Adrenal gland (tissue), 19 donors: ENCODE measurements at regions of chr12 and their contacts with region 1.

Region 1: DNA sequence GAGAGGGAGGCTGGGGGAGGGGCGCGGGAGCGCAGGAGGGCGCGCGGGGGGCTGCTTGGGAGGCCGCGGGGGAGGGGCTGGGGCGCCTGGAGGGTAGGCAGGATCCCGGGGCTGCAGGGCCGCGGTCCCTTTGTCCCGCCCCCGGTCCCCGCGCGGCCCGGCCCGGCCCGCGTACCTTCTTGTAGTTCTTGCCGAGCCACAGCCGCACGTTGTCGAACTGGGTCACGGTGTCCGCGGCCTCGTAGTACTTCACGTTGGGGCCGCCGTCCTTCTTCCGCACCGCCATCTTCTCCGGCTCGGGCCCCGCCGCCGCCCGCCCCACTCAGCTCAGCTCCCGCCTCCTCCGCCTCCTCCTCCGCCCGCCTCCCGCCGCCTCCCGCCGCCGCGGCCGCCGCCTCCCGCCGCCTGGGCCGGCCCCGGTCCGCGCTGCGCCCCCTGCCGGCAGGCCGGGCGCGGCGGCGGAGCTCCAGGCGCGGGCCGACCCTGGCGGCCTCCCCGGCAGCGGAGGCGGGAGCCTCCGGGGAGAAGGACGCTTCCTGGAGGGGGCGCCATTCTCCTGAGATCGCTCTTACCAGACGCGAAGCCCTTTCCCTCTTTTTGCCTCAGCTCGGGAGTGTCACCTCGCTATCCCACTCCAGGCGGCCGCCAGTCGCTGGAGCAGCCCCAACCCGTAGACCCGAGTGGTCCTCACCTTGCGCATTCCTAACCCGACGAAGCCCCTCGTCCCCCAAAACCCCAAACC is at the start of gene SMARCC2:
- DNase-seq: peak; percentile 86 to 93 (median 90)
- H3K4me3 ChIP-seq: peak within 1 kb of the TSS in 3 of 4 donors; percentile 61 to 88 (median 86)
- H3K27ac ChIP-seq: peak within 1 kb of the TSS; percentile 66 to 92 (median 76)
- H3K4me1 ChIP-seq: peaks cover 16 to 25% of the 10 kb centered on the region in 2 donors
- H3K27me3 ChIP-seq: no peaks in the 10 kb centered on the region
- CTCF ChIP-seq: peak; percentile 43 to 91 (median 68)
- POLR2A ChIP-seq: peak in 1 of 2 donors; percentile 60
- total RNA-seq, gene SMARCC2: 36.3 to 102 (median 64.0) TPM

Region 2: DNA sequence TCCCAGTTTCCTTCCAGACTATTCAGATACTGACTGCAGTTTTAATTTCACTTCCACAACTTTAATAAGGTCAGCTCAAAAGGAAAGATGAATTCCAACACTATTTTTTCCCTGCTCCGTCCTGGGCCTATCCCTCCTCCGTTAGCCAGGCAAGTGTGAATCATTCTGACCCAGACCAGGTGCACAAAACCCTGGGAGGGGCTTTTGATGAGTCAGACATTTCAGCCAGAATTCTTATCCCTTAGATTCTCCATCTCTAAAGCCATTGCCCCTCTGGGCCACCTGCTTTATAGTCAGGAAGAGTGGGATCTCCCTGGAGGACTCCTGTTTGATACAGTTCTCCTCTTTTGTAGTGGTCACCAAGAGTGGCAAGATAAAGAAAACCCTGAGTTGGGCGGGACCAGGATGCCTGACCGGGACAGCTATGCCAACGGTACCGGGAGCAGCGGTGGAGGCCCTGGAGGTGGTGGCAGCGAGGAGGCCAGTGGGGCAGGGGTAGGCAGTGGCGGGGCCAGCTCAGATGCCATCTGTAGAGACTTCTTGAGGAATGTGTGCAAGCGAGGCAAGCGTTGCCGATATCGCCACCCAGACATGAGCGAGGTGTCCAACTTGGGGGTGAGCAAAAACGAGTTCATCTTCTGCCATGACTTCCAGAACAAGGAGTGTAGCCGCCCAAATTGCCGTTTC is 69.0 kb before region 1 on chr12:
- intact Hi-C with region 1: loop called (anchors 2 kb)
- DNase-seq: peak in 5 of 7 donors; percentile 38 to 72 (median 57)
- H3K4me3 ChIP-seq: no peak overlapping the region
- H3K27ac ChIP-seq: peak overlapping the region; percentile 33 to 97 (median 89)
- H3K4me1 ChIP-seq: peaks cover 34 to 47% of the 10 kb centered on the region in 2 donors
- H3K27me3 ChIP-seq: no peaks in the 10 kb centered on the region
- CTCF ChIP-seq: no peak
- POLR2A ChIP-seq: peak in 1 of 2 donors; percentile 15

Region 3: GRCh38 chr12:56229916-56230431 is 40.6 kb after region 1 on chr12 and contains the start of gene SLC39A5:
- intact Hi-C with region 1: loop called in 1 of 2 experiments (anchors 5 kb)
- DNase-seq: no peak
- H3K4me3 ChIP-seq: no peak within 1 kb of the TSS
- H3K27ac ChIP-seq: no peak within 1 kb of the TSS
- H3K4me1 ChIP-seq: peaks cover 2 to 5% of the 10 kb centered on the region in 2 donors
- H3K27me3 ChIP-seq: no peaks in the 10 kb centered on the region
- CTCF ChIP-seq: no peak
- POLR2A ChIP-seq: no peak
- total RNA-seq, gene SLC39A5: 0.50 to 0.83 (median 0.65) TPM in 3 of 9 donors, not detected in the others

Region 4: DNA sequence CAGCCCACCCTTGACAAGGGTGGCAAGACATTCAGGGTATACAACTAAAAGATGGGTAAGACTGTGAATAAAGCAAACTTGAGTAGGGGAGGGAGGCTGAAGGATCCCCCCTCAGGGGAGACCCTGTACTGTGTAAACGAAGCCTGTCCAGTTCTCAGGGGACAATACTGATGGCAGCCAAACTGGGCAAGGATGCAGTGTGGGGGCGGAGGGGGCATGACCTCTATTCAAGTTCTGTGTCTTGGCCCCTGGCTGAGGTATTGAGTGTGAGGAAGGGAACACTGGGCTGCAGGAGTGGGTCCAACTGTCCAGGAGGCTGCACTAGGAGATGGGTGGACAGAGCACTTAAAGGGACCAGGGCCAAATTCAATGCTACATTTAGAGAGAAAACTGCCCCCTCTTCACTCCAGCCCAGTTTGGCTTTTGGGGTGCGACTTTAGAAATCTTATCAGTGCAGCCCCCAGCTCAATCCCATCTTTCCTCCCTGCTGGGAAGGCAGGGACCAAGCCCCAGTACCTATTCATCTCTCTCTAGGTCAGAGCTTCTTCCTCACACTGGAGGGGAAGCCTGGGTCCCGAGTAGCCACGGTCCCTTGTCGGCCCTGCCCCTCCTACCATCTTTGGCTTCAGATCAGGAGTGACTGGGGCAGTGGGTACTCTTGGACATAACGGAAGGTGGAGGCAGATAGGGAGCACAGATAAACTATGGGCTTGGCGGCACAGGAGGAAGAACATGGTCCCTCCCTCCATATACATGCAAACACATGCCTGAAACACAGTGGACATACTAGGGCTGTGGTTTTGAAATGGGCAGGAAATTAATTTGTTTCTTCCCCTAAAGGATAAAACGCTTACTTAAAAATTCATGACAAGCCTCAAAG is 52.3 kb after region 1 on chr12:
- intact Hi-C with region 1: no loop called
- DNase-seq: no peak
- H3K4me3 ChIP-seq: no peak overlapping the region
- H3K27ac ChIP-seq: peak overlapping the region in 3 of 5 donors; percentile 64 to 81 (median 69)
- H3K4me1 ChIP-seq: peaks cover 38 to 48% of the 10 kb centered on the region in 2 donors
- H3K27me3 ChIP-seq: no peaks in the 10 kb centered on the region
- CTCF ChIP-seq: no peak
- POLR2A ChIP-seq: no peak

Region 5: DNA sequence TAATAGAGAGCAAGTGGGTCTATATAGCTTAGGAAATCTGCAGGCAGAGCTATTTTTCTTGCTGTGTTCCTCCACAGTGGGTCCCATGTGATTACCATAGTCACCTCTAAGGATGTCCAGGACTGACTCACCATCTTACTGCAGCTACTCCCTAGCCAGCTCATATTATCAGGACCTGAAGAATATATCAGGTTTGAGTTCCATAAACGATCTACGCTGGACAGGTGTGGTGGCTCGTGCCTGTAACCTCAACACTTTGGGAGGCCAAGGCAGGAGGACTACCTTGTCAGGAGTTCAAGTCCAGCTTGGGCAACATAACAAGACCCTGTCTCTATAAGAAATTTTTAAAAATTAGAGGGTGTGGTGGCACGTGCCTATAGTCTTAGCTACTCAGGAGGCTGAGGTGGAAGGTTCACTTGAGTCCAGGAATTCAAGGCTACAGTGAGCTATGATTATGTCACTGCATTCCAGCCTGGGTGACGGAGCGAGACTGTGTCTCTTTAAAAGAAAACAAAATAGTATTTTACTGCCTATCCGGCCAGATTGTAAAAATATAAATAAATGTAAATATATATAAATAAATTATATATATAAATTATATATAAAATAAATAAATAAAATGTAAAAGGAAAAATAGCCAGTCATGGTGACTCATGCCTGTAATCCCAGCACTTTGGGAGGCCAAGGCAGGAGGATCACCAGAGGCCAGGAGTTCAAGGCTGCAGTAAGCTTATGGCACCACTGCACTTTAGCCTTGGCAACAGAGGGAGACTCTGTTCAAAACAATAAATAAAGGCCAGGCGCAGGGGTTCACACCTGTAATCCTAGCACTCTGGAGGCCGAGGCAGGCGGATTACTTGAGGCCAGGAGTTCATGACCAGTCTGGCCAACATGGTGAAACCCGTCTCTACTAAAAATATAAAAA is 272.1 kb after region 1 on chr12:
- intact Hi-C with region 1: loop called in 1 of 2 experiments (anchors 5 kb)
- DNase-seq: no peak
- H3K4me3 ChIP-seq: no peak overlapping the region
- H3K27ac ChIP-seq: no peak overlapping the region
- H3K4me1 ChIP-seq: no peaks in the 10 kb centered on the region
- H3K27me3 ChIP-seq: no peaks in the 10 kb centered on the region
- CTCF ChIP-seq: no peak
- POLR2A ChIP-seq: no peak